ENCODE measurements at regions of chr11 and their contacts with region 1.

Region 1: GRCh38 chr11:20397281-20397680 is 9.8 kb downstream of the PRMT3 start:
- DNase-seq: peak; percentile 39
- H3K4me3 Mint-ChIP-seq: no peak overlapping the region
- H3K27ac Mint-ChIP-seq: peak overlapping the region; percentile 44
- H3K4me1 Mint-ChIP-seq: peaks cover 6% of the 10 kb centered on the region
- H3K27me3 Mint-ChIP-seq: no peaks in the 10 kb centered on the region

Region 2: DNA sequence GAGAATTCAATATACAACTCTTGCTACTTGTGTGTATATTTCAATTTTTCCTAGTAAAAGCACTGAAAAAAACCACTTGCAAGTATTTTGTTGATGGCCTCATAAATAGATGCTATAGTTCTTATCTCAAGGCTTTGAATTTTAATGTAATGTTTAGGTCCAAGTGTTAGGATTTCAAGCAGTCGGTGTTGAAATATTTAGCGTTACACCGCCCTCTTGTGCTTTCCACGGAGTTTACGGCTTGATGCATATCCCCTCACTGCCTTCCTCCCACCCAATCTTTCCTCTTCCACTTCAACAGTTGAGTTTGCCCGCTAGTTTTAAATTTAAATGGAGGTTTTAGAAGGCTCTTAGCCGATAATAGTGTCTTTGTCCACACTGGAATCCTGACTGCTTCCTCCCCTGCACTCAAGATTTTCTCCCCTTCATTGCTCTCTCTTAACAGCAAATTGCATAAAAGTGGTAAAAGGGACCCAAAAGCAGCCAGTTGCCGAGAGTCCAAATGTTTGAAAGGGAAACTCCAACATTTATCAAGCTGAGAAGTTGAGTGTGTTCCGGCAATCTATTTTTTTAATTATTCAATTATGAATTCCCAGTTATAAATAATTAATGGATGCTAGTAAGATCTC is 59.6 kb before region 1 on chr11:
- CTCF ChIA-PET with region 1: no interaction called
- DNase-seq: peak; percentile 22
- H3K4me3 Mint-ChIP-seq: no peak overlapping the region
- H3K27ac Mint-ChIP-seq: no peak overlapping the region
- H3K4me1 Mint-ChIP-seq: peaks cover 3% of the 10 kb centered on the region
- H3K27me3 Mint-ChIP-seq: peaks cover 31% of the 10 kb centered on the region

Region 3: DNA sequence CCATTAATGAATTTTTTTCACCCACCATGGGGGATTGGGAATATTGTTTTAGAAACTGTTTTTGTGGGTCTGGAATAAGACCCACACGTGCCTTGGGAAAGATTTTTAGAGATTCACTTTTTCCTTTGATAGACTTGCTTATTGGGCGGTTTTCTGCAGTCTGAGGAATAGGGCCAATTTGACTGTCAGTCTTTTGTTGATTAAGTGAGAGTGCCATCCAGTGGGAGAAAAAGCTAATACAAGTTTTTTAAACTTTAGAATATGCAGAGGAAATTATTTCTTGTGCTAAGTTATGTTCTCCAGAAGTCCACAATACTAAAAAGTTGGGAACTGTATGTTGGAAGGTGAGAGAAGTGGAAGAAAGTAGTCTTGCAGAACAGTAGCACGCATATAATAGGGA is 46.3 kb after region 1 on chr11:
- CTCF ChIA-PET with region 1: interaction called, 17 read pairs
- DNase-seq: no peak
- H3K4me3 Mint-ChIP-seq: no peak overlapping the region
- H3K27ac Mint-ChIP-seq: no peak overlapping the region
- H3K4me1 Mint-ChIP-seq: no peaks in the 10 kb centered on the region
- H3K27me3 Mint-ChIP-seq: no peaks in the 10 kb centered on the region

Region 4: GRCh38 chr11:20544603-20545237 is 147.4 kb after region 1 on chr11:
- CTCF ChIA-PET with region 1: no interaction called
- DNase-seq: no peak
- H3K4me3 Mint-ChIP-seq: no peak overlapping the region
- H3K27ac Mint-ChIP-seq: no peak overlapping the region
- H3K4me1 Mint-ChIP-seq: no peaks in the 10 kb centered on the region
- H3K27me3 Mint-ChIP-seq: peaks cover 5% of the 10 kb centered on the region

Region 5: GRCh38 chr11:20609727-20610707 is 212.7 kb after region 1 on chr11:
- CTCF ChIA-PET with region 1: interaction called, 19 read pairs
- DNase-seq: peak; percentile 73
- H3K4me3 Mint-ChIP-seq: no peak overlapping the region
- H3K27ac Mint-ChIP-seq: no peak overlapping the region
- H3K4me1 Mint-ChIP-seq: peaks cover 6% of the 10 kb centered on the region
- H3K27me3 Mint-ChIP-seq: peaks cover 64% of the 10 kb centered on the region

Region 6: GRCh38 chr11:20973940-20974559 is 576.8 kb after region 1 on chr11:
- CTCF ChIA-PET with region 1: no interaction called
- DNase-seq: no peak
- H3K4me3 Mint-ChIP-seq: no peak overlapping the region
- H3K27ac Mint-ChIP-seq: no peak overlapping the region
- H3K4me1 Mint-ChIP-seq: no peaks in the 10 kb centered on the region
- H3K27me3 Mint-ChIP-seq: no peaks in the 10 kb centered on the region

Measured in activated naive CD4-positive, alpha-beta T cell treated with anti-CD3 and anti-CD28 coated beads, Interleukin-2, amount 10 ng/mL, durations not matched to agents 7 days and 5 days (primary cell).